HepG2 (cell line): ENCODE measurements at regions of chr2 and their contacts with region 1.

Region 1: DNA sequence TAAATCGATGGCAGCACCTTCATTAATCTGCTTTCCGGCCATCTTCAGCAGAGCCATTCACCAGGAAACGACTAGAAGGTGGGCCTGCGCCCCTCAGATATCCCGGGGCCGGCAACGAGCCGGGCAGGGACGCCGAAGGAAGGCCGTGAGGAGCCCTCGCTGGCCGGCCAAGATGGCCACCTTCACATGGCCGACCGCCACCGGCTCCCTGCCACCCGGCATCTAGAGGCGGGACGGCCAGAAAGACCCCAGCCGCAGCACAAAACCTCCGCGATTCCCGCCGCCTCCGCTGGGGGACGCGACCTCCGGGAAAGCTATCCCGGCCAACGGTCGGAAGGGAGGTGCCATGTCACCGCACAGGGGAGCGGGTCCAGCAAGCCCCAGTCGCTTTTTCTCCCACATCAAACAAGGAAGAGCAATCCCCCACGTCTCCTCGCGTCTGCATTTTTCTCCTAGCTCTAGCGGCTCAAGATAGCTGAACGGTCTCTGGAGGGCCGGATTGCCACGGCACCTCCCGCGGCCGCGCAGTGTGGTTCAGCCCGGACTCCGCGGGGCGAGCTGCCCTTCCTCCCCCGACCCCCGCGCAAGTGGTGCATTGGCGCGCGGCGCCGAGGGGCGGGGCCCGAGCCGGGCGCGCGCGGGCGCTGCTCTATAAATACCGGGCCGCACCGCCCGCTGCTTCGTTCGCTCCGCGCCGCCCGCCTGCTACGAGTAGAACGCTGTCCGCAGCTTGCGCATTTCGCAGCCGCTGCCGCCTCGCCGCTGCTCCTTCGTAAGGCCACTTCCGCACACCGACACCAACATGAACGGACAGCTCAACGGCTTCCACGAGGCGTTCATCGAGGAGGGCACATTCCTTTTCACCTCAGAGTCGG is at the start of gene MAT2A:
- DNase-seq: peak; percentile 91
- ATAC-seq: peak; percentile 83
- H3K4me3 ChIP-seq: peak within 1 kb of the TSS; percentile 81 to 96 (median 95)
- H3K27ac ChIP-seq: peak within 1 kb of the TSS; percentile 99
- H3K4me1 ChIP-seq: peaks cover 44% of the 10 kb centered on the region
- H3K27me3 ChIP-seq: no peaks in the 10 kb centered on the region; a peak in 1 of 5 replicates
- CTCF ChIP-seq: peak; percentile 97
- EP300 ChIP-seq: peak; percentile 3 to 58; a peak in 1 of 4 replicates
- POLR2A ChIP-seq: peak; percentile 99 to 100
- RAD21 ChIP-seq: peak; percentile 86
- total RNA-seq, gene MAT2A: 55.8 and 155 TPM in 2 replicates

Region 2: DNA sequence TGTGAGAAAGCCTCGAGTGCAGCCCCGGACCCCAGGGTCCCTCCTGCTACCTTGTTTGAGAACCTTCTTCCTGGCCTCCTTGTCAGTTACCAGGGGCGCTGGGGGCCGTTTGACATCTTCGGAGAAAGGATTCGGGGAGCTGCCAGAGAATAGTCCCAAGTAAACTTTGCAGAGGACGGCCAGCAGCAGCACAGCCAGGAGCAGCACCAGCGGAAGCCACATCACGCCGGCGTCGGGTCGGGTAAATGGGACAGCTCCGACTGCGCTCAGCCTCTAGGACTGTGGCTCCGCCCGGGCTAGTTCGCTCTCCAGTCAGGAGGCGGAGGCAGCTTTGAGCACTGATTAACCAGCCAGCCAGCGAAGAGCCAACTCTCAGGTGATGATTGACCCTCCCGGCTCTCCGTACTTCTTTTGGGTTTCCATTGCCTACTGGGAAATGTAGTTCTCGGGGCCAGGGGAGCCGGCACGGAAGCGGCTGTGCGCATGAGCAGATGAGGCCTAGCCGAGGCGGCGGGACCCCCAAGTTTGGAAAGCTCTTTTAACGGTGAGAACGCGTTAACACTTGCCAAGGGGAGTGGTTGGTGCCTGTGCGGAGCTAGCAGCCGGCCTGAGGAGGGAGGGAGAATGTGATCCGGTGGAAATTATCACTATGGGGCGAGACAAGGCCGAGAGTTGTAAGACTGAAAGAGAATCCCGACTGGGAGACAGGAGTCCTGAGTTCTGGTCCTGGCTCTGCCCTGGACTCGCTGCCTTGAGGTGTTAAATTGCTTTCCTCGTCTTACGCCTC is 184.2 kb before region 1 on chr2 and contains the starts of genes ELMOD3 and RETSAT:
- CTCF ChIA-PET with region 1: no interaction called
- POLR2A ChIA-PET with region 1: interaction called, 43 read pairs
- in situ Hi-C with region 1: no loop called
- intact Hi-C with region 1: no loop called
- DNase-seq: peak; percentile 100
- ATAC-seq: peak; percentile 98
- H3K4me3 ChIP-seq: peak within 1 kb of the TSS; percentile 89 to 93 (median 91)
- H3K27ac ChIP-seq: peak within 1 kb of the TSS; percentile 72
- H3K4me1 ChIP-seq: peaks cover 33% of the 10 kb centered on the region
- H3K27me3 ChIP-seq: no peaks in the 10 kb centered on the region; a peak in 1 of 5 replicates
- CTCF ChIP-seq: peak; percentile 13; the same call in 1 of the 2 replicates
- EP300 ChIP-seq: peak in 1 of 2 experiments; percentile 61; a peak in 1 of 4 replicates
- POLR2A ChIP-seq: peak; percentile 100
- RAD21 ChIP-seq: peak; percentile 67
- total RNA-seq, gene ELMOD3: 10.3 and 13.3 TPM in 2 replicates
- total RNA-seq, gene RETSAT: 17.2 and 46.7 TPM in 2 replicates

Region 3: DNA sequence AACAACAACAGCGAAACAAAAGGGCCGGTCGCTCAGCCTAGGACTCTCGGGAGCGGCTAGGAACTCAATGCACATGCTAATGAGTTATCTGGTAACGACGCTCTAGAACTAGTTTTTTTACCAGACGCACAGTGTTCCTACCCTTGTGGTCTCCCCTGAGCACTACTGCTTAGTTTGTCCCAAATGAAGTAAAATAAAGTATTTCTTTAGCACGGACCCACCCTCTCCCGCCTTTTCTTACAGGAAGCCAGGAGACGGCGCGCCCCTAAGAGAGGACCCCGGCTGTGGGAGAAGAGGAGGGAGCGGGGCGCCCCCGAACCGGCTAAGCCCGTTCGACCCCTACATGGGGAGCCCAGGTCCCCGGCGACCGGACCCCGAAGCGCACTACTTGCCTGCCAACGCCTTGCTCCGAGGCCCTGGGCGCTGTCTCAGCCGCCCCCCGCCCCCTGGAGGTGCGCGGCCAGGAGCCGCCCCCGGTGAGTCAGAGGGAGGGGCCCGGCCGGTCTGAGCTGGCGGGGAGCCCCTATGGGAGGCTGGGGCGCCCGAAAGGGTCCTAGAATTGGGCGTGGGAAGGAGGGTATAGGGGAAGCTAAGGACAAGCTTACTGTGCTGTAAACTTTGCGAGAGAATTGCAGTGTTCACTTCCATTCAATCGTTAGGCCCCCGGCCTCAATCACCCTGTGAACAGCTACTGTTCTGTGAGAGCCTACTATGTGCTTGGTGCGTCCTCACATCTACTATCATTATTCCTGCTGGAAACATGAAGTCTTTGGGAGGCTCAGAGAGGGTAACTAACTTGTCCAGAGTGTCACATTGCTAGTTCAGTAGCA is 124.9 kb before region 1 on chr2:
- CTCF ChIA-PET with region 1: no interaction called
- POLR2A ChIA-PET with region 1: interaction called, 363 read pairs
- in situ Hi-C with region 1: no loop called
- intact Hi-C with region 1: no loop called
- DNase-seq: no peak
- ATAC-seq: no peak
- H3K4me3 ChIP-seq: no peak overlapping the region
- H3K27ac ChIP-seq: no peak overlapping the region
- H3K4me1 ChIP-seq: peaks cover 74% of the 10 kb centered on the region
- H3K27me3 ChIP-seq: no peaks in the 10 kb centered on the region
- CTCF ChIP-seq: no peak
- EP300 ChIP-seq: no peak
- POLR2A ChIP-seq: no peak
- RAD21 ChIP-seq: no peak

Region 4: DNA sequence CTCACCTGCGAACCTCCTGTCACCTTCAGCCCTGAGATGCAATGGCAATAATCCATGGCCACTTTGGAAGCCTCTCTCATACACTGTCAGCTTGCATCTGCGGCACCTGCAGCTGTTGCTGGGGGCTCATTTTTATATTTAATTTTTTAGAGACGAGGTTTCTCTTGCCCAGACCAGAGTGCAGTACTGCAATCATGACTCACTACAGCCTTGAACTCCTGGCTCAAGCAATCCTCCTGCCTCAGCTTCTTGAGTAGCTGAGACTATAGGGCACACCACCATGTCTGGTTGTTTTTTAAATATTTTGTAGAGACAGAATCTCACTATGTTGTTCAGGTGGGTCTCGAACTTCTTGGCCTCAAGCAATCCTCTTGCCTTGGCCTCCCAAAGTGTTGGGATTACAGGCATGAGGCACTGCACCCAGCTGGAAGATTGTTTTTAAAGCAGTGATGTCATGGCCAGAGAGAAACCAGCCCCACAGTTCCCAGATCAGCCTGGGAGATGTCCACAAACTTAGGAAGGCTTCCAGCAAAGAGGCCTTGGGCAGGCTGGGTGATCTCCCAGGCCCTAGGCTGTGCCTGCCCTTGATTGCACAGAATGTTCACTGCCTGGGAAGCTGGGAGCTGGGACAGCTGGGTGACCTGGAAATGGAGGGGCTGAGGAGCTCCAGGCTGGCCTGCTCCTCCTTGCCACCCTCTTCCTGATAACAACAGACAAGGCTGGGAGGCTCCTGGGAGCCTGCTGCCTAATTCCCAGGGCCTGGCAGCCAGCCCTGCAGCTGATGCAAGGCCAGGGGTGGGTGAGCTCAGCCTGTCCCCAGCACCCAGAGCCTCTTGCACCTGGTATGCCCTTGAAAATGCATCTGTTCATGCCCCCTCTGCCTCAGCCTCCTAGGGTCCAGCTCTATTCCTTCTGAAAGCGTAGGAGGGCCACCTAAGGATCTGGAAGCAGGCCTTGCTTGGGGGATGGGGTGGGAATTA is 93.1 kb before region 1 on chr2:
- CTCF ChIA-PET with region 1: no interaction called
- POLR2A ChIA-PET with region 1: interaction called, 37 read pairs
- in situ Hi-C with region 1: no loop called
- intact Hi-C with region 1: no loop called
- DNase-seq: no peak
- ATAC-seq: peak; percentile 46
- H3K4me3 ChIP-seq: no peak overlapping the region
- H3K27ac ChIP-seq: no peak overlapping the region
- H3K4me1 ChIP-seq: peaks cover 32% of the 10 kb centered on the region
- H3K27me3 ChIP-seq: peaks cover 0 to 10% of the 10 kb centered on the region in 2 experiments; a peak in 1 of 5 replicates
- CTCF ChIP-seq: no peak
- EP300 ChIP-seq: no peak
- POLR2A ChIP-seq: no peak
- RAD21 ChIP-seq: no peak

Region 5: DNA sequence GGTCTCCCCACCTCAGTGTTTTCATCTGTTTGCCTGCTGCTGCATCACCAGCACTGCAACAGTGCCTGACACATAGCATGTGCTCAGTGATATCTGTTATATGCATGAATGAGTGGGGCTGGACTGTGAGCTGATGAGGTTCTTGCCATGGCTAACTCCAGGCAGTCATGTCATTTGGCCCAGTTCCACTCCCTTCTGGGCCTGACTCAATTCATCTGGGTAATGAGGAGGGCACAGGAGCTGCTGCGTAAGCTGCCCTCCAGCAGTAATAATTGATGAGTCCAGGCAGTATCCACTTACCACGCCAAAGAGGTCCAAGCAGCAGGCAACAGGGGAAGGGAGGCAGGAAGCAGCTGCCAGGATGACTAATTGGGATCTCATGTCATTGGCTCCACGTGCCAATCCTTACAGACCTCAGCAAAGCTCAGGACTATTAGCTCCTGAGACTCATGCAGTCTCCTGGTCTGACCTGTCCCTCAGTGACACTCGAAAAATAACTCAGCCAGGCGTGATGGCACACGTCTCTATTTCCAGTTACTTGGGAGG is 33.9 kb before region 1 on chr2:
- CTCF ChIA-PET with region 1: no interaction called
- POLR2A ChIA-PET with region 1: interaction called, 28 read pairs
- in situ Hi-C with region 1: no loop called
- intact Hi-C with region 1: loop called (anchors 5 kb)
- DNase-seq: no peak
- ATAC-seq: no peak
- H3K4me3 ChIP-seq: no peak overlapping the region
- H3K27ac ChIP-seq: no peak overlapping the region
- H3K4me1 ChIP-seq: peaks cover 53% of the 10 kb centered on the region
- H3K27me3 ChIP-seq: 0 out of 5 replicates have a peak, but pooled peaks cover 0 to 5% of the 10 kb centered on the region in 2 experiments
- CTCF ChIP-seq: no peak
- EP300 ChIP-seq: no peak
- POLR2A ChIP-seq: no peak
- RAD21 ChIP-seq: no peak

Region 6: DNA sequence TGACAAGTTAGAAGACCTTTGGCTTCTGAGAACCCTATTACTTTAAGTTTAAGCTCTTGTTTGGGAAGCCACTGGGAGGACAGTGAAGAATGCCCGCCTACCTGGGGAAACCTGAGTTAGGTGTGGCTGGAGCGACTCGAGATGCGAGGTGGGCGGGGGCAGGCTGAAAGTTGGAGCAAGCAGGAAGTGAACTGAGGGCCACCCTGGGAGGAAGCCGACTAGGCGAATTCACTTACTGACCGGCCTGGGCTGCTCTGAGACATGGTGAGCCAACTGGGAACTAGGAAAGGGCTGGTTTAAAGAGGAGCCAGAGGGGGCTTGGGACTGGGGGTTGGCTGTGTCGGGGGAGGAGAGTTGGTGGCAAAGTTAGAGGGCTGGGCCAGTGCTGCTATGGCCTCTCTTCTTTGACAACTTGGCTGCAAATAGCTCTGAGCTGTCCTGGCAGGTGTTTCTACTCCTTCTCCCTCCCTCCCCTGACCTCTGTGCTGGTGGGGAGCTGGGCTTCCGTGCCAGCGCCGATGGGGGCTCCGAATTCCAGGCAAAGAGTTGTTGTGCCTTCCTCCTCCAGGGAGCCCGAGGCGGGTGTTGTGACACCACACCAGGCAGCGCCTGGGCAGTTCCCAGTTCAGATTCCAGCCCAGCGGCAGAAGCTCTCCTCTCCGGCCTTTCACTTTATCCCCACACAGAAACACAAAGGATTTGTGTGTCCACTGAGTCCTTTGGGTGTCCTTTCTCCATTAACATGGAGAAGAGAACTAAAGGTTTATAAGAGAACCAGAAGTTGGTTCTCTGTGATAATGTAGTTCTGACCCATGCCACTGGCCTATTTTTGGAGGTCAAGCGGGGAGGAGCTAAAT is 38.9 kb after region 1 on chr2 and contains the start of gene VAMP8:
- CTCF ChIA-PET with region 1: no interaction called
- POLR2A ChIA-PET with region 1: interaction called, 40 read pairs
- in situ Hi-C with region 1: no loop called
- intact Hi-C with region 1: no loop called
- DNase-seq: peak; percentile 44
- ATAC-seq: peak; percentile 86
- H3K4me3 ChIP-seq: peak within 1 kb of the TSS; percentile 79 to 90 (median 87)
- H3K27ac ChIP-seq: peak within 1 kb of the TSS; percentile 64
- H3K4me1 ChIP-seq: peaks cover 58% of the 10 kb centered on the region
- H3K27me3 ChIP-seq: peaks cover 0 to 3% of the 10 kb centered on the region in 2 experiments; a peak in 2 of 5 replicates
- CTCF ChIP-seq: no peak
- EP300 ChIP-seq: no peak
- POLR2A ChIP-seq: peak; percentile 41 to 69; a peak in 3 of 4 replicates
- RAD21 ChIP-seq: no peak; the same call in 1 of the 2 replicates
- total RNA-seq, gene VAMP8: 83.3 and 97.0 TPM in 2 replicates

Region 7: GRCh38 chr2:85602476-85603234 is 63.9 kb after region 1 on chr2 and contains the start of gene TMEM150A:
- CTCF ChIA-PET with region 1: no interaction called
- POLR2A ChIA-PET with region 1: interaction called, 50 read pairs
- in situ Hi-C with region 1: no loop called
- intact Hi-C with region 1: no loop called
- DNase-seq: peak; percentile 87
- ATAC-seq: peak; percentile 90
- H3K4me3 ChIP-seq: peak within 1 kb of the TSS; percentile 84 to 98 (median 91)
- H3K27ac ChIP-seq: peak within 1 kb of the TSS; percentile 80
- H3K4me1 ChIP-seq: peaks cover 85% of the 10 kb centered on the region
- H3K27me3 ChIP-seq: no peaks in the 10 kb centered on the region; a peak in 1 of 5 replicates
- CTCF ChIP-seq: peak; percentile 46
- EP300 ChIP-seq: peak in 1 of 2 experiments; percentile 34; a peak in 1 of 4 replicates
- POLR2A ChIP-seq: peak in 1 of 2 experiments; percentile 66; a peak in 2 of 4 replicates
- RAD21 ChIP-seq: peak; percentile 89
- total RNA-seq, gene TMEM150A: 24.0 and 30.1 TPM in 2 replicates

Region 8: DNA sequence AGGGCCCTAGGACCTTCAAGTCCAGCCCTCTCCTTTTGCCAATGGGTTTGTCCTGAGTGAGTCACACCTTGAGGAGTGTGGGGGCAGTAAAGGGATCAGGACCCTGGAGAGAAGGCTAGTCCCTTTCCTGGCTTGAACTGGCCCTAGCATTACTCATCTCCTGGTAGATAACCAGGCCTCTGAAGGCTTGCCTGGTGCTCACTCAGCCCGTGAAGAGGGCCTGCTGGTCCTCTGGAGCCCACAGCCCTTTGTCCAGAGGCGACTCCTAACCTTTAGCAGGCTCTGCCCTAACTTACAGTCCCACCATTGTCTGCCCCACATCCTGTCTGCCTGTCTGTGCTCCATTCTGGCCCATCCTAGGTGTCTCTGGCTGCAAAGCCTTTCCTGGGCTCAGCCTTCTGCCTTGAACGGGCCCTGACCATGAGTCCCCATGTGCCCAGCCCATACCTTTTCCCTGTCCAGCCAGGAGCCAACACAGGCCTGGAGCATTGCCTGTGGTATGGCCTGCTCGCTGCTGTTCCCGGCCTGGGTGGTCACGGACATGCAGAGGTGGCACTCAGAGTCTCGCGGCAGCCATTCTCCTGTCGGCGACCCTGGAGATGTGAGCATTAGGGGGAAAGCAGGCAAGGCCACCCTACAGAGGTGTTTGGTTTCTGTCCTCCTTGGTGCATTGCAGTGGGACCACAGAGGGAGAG is 124.3 kb after region 1 on chr2:
- CTCF ChIA-PET with region 1: no interaction called
- POLR2A ChIA-PET with region 1: no interaction called
- in situ Hi-C with region 1: no loop called
- intact Hi-C with region 1: no loop called
- DNase-seq: peak; percentile 15
- ATAC-seq: peak; percentile 5
- H3K4me3 ChIP-seq: no peak overlapping the region
- H3K27ac ChIP-seq: no peak overlapping the region
- H3K4me1 ChIP-seq: peaks cover 25% of the 10 kb centered on the region
- H3K27me3 ChIP-seq: peaks cover 0 to 19% of the 10 kb centered on the region in 2 experiments; a peak in 3 of 5 replicates
- CTCF ChIP-seq: no peak
- EP300 ChIP-seq: no peak
- POLR2A ChIP-seq: no peak
- RAD21 ChIP-seq: no peak